Right ventricle myocardium superior (tissue), 1 donor: ENCODE measurements at regions of chr12 and their contacts with region 1.

Region 1: GRCh38 chr12:121697098-121697698 is 15.4 kb upstream of the TMEM120B start:
- DNase-seq: no peak
- ATAC-seq: no peak

Region 2: GRCh38 chr12:121279507-121279915 is 417.7 kb before region 1 on chr12:
- intact Hi-C with region 1: no loop called
- DNase-seq: peak; percentile 79
- ATAC-seq: peak; percentile 65

Region 3: GRCh38 chr12:121657305-121658008 is 39.7 kb before region 1 on chr12:
- intact Hi-C with region 1: no loop called
- DNase-seq: no peak
- ATAC-seq: no peak

Region 4: DNA sequence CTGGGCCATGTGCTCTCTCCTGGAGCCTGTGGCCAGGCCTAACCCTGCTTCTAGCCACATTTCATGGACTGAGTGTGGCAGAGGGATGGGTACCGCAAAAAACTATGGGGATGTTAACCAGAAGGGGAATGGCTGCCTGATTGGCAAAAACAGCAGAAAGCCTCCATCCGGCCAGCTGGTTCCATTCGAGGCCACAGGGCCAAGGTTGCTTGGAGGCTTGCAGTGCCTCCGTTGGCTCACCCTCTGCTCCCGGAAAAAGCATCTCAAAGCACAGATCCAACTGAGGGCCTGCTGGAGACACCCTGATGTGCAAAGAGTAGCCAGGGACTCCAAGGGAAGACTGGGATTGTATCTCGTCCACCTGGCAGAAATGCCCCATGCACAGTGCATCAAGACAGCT is 31.8 kb after region 1 on chr12:
- intact Hi-C with region 1: no loop called
- DNase-seq: no peak
- ATAC-seq: no peak

Region 5: DNA sequence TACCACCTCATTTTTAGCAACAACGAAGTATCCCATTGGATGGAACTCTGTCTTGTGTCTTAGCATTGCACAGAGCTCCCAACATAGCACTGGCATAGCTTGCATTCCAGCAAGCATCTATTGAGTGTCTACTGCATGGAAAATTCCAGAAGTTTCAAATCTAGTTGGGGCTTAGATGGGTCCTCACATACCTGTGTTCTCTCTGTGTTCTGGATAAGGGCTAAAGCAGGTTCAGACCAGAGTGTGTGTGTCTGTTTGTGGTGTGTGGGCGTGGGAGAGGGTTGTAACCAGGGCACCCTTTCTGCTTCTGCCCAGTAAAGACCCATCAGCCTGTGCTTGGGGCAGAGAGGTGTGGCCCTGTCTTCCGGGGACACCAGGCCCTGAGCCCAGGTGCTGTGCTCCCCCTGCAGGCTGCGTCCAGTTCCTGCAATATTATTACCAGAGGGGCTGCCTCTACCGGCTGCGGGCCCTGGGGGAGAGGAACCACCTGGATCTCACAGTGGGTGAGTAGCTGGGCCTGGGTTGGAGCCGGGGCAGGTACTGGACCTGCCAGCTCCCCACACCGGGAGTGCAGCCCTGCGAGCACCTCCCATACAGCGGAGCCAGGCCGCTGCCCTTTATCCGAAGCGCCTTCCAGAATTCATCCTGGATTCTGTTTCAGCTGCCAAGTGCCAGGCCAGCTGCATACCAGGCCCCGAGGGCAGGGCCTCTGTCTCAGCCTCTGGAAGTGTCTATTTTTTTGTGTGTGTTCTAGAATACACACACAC is 76.0 kb after region 1 on chr12:
- intact Hi-C with region 1: loop called (anchors 2 kb)
- DNase-seq: peak; percentile 81
- ATAC-seq: peak; percentile 69

Region 6: DNA sequence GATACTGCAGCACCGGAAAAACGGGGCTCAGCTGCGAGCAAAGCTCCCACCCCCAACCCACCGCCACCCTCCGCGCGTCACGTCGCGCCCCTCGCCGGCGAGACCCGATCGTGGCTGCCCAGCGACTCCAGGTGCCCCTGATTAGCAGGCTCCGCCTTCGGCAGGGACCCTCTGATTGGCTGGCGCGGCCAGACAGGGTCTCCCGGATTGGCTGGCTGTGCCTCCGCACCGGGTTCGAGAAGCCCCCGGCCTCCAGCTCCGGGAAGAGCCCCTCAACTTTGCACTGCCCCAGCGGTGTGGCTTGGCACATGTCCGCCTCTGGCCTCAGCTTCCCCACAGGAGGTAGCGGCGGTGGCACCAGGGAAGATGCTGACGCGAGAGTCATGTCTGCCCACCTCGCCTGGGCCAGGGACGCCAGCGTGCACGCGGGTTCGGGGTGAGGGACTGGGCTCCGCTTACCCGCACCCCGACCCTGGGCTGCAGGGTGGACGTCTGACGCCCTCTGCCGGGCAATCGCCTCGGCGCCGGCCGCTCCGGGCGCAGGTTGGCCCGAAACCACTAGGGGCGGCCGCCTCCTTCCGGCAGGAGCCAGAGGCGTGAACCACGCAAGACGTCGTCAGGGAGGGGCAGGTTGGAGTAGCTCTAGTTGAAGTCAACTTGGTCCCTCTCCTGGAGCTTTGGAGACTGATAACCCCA is 96.8 kb after region 1 on chr12:
- intact Hi-C with region 1: loop called (anchors 5 kb)
- DNase-seq: peak; percentile 94
- ATAC-seq: peak; percentile 69

Region 7: DNA sequence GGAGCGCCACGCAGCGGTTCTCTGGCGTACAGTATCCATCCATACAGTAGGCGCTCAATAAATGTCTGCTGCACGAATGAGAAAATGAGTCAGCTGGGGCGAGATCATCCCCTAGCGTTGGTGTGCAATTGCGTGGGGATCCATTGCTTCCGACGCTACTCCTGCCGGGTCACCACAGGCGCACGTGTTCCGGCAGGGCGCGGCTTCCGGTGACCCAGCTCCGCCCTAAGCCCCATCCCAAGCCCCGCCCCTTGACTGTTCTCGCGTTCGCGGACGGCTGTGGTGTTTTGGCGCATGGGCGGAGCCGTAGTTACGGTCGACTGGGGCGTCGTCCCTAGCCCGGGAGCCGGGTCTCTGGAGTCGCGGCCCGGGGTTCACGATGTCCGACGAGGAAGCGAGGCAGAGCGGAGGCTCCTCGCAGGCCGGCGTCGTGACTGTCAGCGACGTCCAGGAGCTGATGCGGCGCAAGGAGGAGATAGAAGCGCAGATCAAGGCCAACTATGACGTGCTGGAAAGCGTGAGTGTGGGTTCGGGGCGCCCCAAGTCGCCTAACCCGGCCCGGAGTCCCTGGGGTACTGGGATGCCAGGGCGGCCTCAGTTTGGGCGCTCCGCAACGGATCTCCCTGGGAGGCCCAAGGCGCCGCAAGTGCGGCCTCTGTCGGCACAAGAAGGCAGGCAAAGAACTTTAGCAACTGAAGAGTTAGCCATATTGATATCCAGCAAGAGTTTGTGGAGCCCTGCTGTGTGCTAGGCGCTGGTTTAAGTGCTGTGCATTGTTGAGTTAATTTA is 191.5 kb after region 1 on chr12 and contains the start of gene PSMD9:
- intact Hi-C with region 1: loop called (anchors 5 kb)
- DNase-seq: peak; percentile 99
- ATAC-seq: peak; percentile 99
- total RNA-seq, gene PSMD9: 34.9 TPM